Activated B cell treated with CpG ODN at 0.5 μM for 24 hours (primary cell): ENCODE measurements at regions of chr4 and their contacts with region 1.

Region 1: GRCh38 chr4:98995183-98996055 is at the start of gene METAP1:
- DNase-seq: peak; percentile 92
- ATAC-seq: peak; percentile 87
- H3K4me3 Mint-ChIP-seq: peak within 1 kb of the TSS; percentile 86
- H3K27ac Mint-ChIP-seq: peak within 1 kb of the TSS; percentile 94
- H3K4me1 Mint-ChIP-seq: peaks cover 25% of the 10 kb centered on the region
- H3K27me3 Mint-ChIP-seq: no peaks in the 10 kb centered on the region
- CTCF ChIP-seq: no peak
- total RNA-seq, gene METAP1: 29.9 and 38.6 TPM in 2 replicates

Region 2: DNA sequence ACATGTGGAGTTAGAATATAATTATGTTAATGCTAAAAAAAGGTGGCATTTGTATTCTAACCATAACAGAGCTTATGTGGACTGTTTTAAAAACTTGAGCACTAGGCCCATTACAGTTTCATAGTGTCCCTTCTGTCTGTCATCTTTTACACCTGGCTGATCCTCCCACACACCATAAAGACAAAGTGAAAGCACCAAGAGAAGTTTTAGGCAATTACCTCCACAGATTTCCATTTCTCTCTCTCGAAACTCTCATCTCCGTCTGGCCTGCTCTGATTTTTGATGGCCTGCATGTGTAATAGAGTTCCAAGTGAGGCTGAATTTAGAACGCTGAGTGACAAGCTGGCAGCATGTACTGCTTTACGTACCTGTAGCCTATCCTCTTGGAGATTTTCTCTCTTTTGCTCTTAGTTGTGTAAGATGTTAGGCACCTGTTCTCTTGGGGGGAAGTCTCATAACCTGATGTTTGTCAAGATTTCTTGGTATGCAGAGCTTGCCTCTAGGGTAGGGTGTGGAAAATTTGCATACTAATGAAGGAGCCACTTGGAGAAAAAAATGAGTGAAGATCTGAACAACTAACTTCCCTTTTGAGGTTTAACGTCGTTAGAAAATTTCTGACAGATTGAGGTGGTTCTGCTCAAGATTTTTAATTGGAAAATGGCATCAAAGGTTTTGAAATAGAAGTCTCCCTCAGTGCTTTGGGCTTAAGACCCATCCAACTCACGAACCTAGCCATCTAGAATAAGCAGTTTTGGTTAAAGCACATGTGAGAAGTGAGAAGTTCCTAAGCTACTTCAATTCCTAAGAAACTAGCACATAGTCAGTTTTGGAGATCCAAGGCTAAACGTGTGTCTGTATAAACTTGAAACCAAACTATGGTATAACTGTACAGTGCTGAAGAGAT is 791.8 kb before region 1 on chr4:
- CTCF ChIA-PET with region 1: no interaction called
- POLR2A ChIA-PET with region 1: interaction called, 5 read pairs
- intact Hi-C with region 1: loop called (anchors 5 kb)
- DNase-seq: no peak
- ATAC-seq: peak; percentile 82
- H3K4me3 Mint-ChIP-seq: peak overlapping the region; percentile 62
- H3K27ac Mint-ChIP-seq: peak overlapping the region; percentile 86
- H3K4me1 Mint-ChIP-seq: peaks cover 37% of the 10 kb centered on the region
- H3K27me3 Mint-ChIP-seq: no peaks in the 10 kb centered on the region
- CTCF ChIP-seq: no peak

Region 3: DNA sequence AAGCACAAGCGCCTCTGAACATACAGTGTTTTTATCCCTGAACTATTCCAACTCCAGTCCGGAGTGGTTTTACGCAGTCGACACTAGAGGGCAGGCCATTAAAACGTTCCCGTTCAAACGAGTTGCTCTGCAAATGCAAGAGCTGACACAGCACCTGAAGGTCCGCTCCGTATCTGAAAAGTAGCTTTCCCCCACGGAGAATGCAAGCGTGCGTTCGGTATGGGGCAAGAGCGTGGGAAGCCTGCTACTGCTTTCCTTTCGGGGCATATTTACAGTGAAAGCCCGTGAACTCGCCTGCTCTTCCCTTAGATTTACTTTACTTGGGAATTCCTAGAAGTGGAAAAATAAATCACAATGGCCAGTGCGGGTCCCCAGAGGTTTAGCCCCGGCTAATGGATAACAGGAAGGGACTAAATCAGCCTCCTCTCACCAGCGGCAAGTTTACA is 527.8 kb before region 1 on chr4:
- CTCF ChIA-PET with region 1: interaction called, 3 read pairs
- POLR2A ChIA-PET with region 1: no interaction called
- intact Hi-C with region 1: loop called (anchors 1 kb)
- DNase-seq: peak; percentile 25
- ATAC-seq: peak; percentile 94
- H3K4me3 Mint-ChIP-seq: peak overlapping the region; percentile 61
- H3K27ac Mint-ChIP-seq: no peak overlapping the region
- H3K4me1 Mint-ChIP-seq: peaks cover 7% of the 10 kb centered on the region
- H3K27me3 Mint-ChIP-seq: no peaks in the 10 kb centered on the region
- CTCF ChIP-seq: peak; percentile 12

Region 4: DNA sequence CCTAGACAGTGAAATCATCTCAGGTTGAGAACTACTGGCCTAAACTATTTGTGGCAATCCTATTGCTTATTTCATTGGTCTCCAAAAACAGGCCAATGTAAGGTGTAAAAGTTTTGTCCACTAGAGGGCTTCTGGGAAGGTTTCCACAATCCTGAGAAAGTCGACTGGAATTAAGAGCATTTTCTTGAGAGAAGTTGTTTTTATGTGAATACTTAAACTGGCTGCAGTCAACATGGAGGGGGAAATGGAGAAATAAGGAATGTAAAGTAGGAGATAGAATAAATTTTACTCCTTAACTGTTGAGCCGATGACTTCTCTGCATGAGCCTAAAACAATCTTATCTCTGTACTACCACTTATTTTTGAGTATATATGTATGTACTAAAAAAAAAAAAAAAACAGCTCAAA is 55.5 kb before region 1 on chr4:
- CTCF ChIA-PET with region 1: interaction called, 4 read pairs
- POLR2A ChIA-PET with region 1: no interaction called
- intact Hi-C with region 1: loop called (anchors 2 kb)
- DNase-seq: no peak
- ATAC-seq: peak; percentile 34
- H3K4me3 Mint-ChIP-seq: no peak overlapping the region
- H3K27ac Mint-ChIP-seq: no peak overlapping the region
- H3K4me1 Mint-ChIP-seq: peaks cover 8% of the 10 kb centered on the region
- H3K27me3 Mint-ChIP-seq: no peaks in the 10 kb centered on the region
- CTCF ChIP-seq: peak; percentile 34

Region 5: GRCh38 chr4:99088481-99089365 is 93.3 kb after region 1 on chr4 and contains the start of gene ADH5:
- CTCF ChIA-PET with region 1: interaction called, 20 read pairs
- POLR2A ChIA-PET with region 1: interaction called, 49 read pairs
- intact Hi-C with region 1: loop called (anchors 1 kb)
- DNase-seq: peak; percentile 77
- ATAC-seq: peak; percentile 95
- H3K4me3 Mint-ChIP-seq: peak within 1 kb of the TSS; percentile 99
- H3K27ac Mint-ChIP-seq: peak within 1 kb of the TSS; percentile 99
- H3K4me1 Mint-ChIP-seq: peaks cover 41% of the 10 kb centered on the region
- H3K27me3 Mint-ChIP-seq: no peaks in the 10 kb centered on the region
- CTCF ChIP-seq: no peak
- total RNA-seq, gene ADH5: 70.1 and 74.2 TPM in 2 replicates

Region 6: DNA sequence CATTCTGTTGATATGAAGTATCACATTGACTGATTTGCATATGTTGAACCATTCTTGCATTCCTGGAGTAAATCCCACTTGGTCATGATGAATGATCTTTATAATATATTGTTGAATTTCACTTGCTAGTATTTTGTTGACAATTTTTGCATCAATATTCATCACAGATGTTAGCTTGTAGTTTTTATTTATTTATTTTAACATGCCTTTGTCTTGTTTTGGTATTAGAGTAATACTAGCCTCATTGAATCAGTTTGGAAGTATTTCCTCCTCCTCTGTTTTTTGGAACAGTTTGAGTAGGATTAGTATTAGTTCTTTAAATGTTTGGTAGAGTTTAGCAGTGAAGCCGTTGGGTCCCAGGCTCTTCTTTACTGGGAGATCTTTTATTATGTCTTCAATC is 371.1 kb after region 1 on chr4:
- CTCF ChIA-PET with region 1: no interaction called
- POLR2A ChIA-PET with region 1: no interaction called
- intact Hi-C with region 1: no loop called
- DNase-seq: no peak
- ATAC-seq: no peak
- H3K4me3 Mint-ChIP-seq: no peak overlapping the region
- H3K27ac Mint-ChIP-seq: no peak overlapping the region
- H3K4me1 Mint-ChIP-seq: no peaks in the 10 kb centered on the region
- H3K27me3 Mint-ChIP-seq: peaks cover 7% of the 10 kb centered on the region
- CTCF ChIP-seq: no peak

Region 7: GRCh38 chr4:99563310-99564186 is 568.1 kb after region 1 on chr4 and contains the start of gene TRMT10A:
- CTCF ChIA-PET with region 1: no interaction called
- POLR2A ChIA-PET with region 1: interaction called, 4 read pairs
- intact Hi-C with region 1: loop called (anchors 1 kb)
- DNase-seq: peak; percentile 88
- ATAC-seq: peak; percentile 85
- H3K4me3 Mint-ChIP-seq: peak within 1 kb of the TSS; percentile 99
- H3K27ac Mint-ChIP-seq: peak within 1 kb of the TSS; percentile 100
- H3K4me1 Mint-ChIP-seq: peaks cover 18% of the 10 kb centered on the region
- H3K27me3 Mint-ChIP-seq: peaks cover 12% of the 10 kb centered on the region
- CTCF ChIP-seq: no peak
- total RNA-seq, gene TRMT10A: 4.9 and 10.2 TPM in 2 replicates

Region 8: DNA sequence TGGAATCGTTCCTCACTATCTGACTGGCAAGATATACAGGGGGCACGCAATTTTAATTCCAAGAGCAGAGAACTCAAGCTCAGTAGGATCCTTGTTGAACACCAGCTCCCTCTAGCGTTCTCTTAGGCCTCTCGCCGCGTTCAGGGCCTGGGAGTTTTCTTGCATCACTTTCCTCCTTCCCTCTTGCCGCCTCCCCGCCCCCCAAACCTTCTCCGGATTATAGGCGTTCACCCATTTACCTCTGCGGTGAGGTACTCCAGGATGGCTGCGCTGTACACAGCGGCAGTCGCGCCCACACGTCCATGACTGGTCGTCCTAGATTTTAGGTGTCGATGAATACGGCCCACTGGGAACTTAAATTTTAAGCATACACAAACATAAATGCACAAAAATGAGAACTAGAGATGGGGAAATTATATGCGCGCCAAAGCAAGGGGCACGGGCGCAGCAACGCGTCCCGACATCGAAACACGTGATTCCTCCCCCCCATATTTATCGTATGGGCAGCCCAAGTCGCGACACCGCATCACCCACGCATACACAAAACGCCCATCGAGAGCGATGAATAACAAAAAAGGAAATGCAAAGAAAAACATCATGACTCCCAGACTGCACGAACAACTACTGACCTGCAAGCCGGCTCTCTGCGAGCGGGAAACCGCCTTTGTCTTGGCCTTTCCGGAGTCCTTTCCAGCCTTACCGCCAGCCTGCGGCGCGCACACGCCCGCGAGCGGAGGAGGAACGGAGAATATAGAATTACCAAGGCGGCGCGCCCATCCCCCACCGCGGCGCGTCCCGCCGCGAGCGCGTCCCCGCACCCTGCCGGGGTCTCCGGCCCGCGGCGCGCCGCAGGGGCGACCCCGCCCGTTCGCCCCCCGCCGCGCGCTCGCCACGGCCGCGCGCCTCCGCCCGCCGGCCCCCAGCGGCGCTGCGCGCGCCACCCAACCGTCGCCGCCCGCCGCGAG is 953.9 kb after region 1 on chr4:
- CTCF ChIA-PET with region 1: no interaction called
- POLR2A ChIA-PET with region 1: interaction called, 3 read pairs
- intact Hi-C with region 1: loop called (anchors 1 kb)
- DNase-seq: peak; percentile 69
- ATAC-seq: peak; percentile 32
- H3K4me3 Mint-ChIP-seq: no peak overlapping the region
- H3K27ac Mint-ChIP-seq: no peak overlapping the region
- H3K4me1 Mint-ChIP-seq: peaks cover 31% of the 10 kb centered on the region
- H3K27me3 Mint-ChIP-seq: no peaks in the 10 kb centered on the region
- CTCF ChIP-seq: no peak